ENCODE measurements at regions of chr7 and their contacts with region 1.

Region 1: GRCh38 chr7:86926732-86927131 is 132.7 kb downstream of the ELAPOR2 start:
- DNase-seq: no peak
- ATAC-seq: no peak
- H3K4me3 ChIP-seq: no peak overlapping the region
- H3K27ac ChIP-seq: no peak overlapping the region
- H3K4me1 ChIP-seq: no peaks in the 10 kb centered on the region
- H3K27me3 ChIP-seq: no peaks in the 10 kb centered on the region

Region 2: DNA sequence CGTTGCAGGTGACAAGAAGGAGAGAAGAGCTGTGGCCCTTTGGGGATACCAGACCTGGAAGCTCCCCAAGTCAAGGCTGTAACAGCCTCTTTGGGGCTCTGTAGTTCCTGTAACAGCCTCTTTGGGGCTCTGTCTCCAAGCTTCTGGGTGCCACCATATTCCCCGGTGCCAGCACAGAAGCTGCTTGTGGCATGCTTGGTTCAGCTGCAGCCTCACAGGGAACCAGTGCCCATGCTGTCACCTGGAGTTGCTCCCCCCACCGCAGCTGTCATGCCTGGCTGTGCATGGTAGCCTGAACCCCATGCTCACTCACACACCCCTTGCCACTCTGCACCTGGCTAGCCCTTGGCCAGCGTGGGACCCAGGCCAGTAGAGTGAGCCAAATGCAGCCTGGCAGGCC is 23.6 kb after region 1 on chr7:
- intact Hi-C with region 1: no loop called
- DNase-seq: no peak
- ATAC-seq: no peak
- H3K4me3 ChIP-seq: no peak overlapping the region
- H3K27ac ChIP-seq: no peak overlapping the region
- H3K4me1 ChIP-seq: peaks cover 0 to 3% of the 10 kb centered on the region in 2 donors
- H3K27me3 ChIP-seq: no peaks in the 10 kb centered on the region

Region 3: GRCh38 chr7:86972072-86972471 is 45.3 kb after region 1 on chr7:
- intact Hi-C with region 1: no loop called
- DNase-seq: no peak
- ATAC-seq: no peak
- H3K4me3 ChIP-seq: no peak overlapping the region
- H3K27ac ChIP-seq: no peak overlapping the region
- H3K4me1 ChIP-seq: no peaks in the 10 kb centered on the region
- H3K27me3 ChIP-seq: no peaks in the 10 kb centered on the region

Region 4: DNA sequence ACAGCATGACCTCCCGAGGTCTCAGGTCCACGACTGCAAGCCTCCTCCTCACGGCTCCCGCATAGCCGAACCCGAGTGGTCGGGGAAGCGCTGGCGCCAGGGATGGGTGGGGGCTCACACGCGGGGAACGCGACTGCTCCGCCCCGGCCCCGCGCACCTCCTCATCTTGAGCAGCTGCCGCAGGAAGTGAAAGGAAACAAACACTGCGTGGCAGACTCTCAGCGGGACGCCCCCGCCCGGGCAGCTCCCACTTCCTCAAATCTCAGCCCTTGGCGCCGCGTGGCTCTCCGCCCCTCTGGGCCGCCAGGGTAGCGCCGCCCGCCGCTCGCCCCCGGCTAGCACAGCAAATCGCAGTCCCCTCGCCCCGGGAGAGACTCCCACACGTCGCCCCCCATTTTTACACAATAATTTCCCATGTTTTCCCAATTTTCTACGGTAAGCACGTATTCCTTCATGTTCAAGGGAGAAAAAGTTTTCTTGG is 292.9 kb after region 1 on chr7 and contains the start of gene TMEM243:
- intact Hi-C with region 1: loop called in 1 of 2 experiments (anchors 5 kb)
- DNase-seq: peak; percentile 92
- ATAC-seq: peak; percentile 93
- H3K4me3 ChIP-seq: peak within 1 kb of the TSS; percentile 80 to 96
- H3K27ac ChIP-seq: peak within 1 kb of the TSS; percentile 23 to 72
- H3K4me1 ChIP-seq: peaks cover 0 to 7% of the 10 kb centered on the region in 2 donors
- H3K27me3 ChIP-seq: no peaks in the 10 kb centered on the region
- total RNA-seq, gene TMEM243: 25.3 to 37.7 TPM

Region 5: DNA sequence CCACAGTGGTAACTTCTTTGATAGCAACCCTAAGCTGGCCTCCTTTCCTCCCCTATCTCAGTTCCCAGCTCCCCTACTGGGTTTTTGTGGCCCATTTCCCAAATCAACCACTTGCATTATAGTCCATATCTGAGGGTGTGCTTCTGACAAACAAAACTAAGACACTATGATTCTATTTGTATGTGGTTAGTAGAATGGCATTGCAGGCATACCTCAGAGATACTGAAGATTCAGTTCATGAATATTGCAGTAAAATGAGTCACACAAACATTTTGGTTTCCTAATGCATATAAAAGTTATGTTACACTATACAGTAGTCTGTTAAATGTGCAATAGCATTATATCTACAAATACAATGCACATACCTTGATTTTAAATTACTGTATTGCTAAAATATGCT is 308.2 kb after region 1 on chr7:
- intact Hi-C with region 1: loop called (anchors 5 kb)
- DNase-seq: no peak
- ATAC-seq: no peak
- H3K4me3 ChIP-seq: no peak overlapping the region
- H3K27ac ChIP-seq: no peak overlapping the region
- H3K4me1 ChIP-seq: peaks cover 0 to 4% of the 10 kb centered on the region in 2 donors
- H3K27me3 ChIP-seq: no peaks in the 10 kb centered on the region

Measured in aorta (tissue), 5 donors.